HEK293 (cell line): ENCODE measurements at regions of chr21 and their contacts with region 1.

Region 1: DNA sequence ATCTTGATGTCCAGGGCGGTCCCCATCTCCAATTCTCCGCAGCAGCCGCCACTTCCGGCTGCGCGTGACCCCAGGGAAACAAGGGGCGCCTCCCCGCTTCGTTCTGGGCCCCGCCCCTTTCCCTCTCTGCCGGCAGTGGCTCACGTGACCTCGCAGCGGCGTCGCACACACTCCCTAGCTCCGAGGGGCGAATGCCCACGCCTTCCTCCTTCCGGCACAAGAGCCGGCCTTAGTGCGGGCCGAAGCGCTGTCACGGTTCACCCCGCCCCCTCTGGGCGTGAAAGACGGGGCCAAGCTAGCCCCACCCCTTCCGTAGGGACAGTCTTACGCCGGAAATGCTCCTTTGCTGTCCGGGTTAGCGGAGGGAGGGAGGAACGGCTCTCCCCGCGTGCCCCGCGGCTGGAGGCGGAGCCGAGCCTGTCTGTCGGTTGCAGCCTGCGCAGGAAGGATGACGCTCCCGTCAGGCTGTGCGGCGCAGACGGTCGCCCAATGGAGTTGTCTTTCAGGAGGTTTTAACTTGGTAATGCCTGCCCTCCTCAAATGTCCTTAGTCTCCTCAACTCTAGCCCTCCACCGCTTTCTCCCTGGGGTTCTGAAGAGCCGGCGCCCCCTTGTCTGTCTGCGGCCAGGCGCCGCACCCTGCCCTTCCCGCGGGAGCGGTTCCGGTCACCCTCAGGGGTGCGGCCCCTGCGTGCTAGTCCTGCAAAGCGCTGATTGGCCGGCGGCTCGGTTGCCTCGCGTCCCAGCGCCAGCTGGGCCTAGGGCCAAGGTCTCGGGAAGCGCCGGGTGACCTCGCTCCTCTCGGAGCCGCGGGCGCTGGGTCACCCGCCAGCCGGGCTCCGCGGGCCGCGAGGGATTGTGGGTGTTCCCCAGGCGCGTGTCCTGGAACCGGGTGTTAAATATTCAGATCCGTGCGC is at the start of gene VPS26C:
- H3K4me3 ChIP-seq: peak within 1 kb of the TSS; percentile 85
- H3K27ac ChIP-seq: peak within 1 kb of the TSS; percentile 96
- H3K4me1 ChIP-seq: peaks cover 5% of the 10 kb centered on the region; the same call in 1 of the 2 replicates
- CTCF ChIP-seq: no peak

Region 2: DNA sequence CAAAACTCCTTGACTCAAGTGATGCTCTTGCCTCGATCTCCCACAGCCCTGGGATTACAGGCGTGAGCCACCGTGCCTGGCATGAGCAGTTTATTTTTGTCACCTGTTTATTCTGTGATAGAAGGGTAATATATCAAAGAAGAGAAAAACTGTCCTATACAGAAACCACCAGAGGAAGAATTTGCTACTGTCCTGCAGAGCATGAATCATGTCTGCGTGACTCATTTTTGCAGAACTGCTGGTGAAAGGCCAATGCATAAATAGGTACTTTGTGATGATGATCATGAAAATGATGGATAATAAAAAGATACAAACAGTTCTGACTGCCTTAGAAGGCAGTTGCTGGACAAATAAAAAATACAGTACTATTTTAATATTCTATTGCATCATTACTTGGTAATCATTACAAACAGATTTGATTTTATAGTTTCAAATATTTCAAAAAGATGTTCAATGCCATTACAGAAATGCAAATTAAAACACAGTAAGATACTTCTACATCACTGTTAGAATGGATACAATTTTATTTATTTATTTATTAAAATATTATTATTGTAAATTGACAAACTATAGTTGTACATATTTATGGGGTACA is 234.6 kb before region 1 on chr21:
- CTCF ChIA-PET with region 1: no interaction called
- POLR2A ChIA-PET with region 1: no interaction called
- H3K4me3 ChIP-seq: no peak overlapping the region
- H3K27ac ChIP-seq: no peak overlapping the region
- H3K4me1 ChIP-seq: peaks cover 2% of the 10 kb centered on the region; the same call in 1 of the 2 replicates
- CTCF ChIP-seq: no peak

Region 3: DNA sequence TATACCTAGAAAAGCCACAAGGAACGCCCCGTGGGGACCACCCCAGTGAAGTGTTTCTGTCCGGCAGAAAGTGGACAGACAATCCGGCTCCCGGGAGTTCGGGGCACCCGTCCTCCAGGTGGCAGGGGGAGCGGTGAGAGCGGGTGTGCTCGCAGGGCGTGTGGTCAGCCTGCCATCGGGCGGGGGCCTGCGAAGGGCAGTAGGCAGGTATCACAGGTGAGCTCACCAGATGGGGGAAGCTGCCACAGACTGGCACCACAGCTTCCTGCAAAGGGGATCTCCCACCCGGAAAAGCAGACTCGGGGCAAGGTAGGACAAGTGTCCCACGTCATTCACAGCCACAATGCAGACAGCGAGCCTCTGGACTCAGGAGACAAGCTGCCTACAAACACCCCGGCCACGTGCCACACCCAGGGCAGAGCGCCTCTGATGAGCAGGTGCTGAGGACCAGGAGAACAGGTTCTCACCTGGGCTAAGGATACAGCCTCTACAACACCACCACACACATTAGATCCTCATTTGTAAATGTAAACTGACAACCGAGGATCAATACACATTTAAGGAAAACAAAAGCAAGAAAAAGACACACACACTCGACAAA is 36.8 kb before region 1 on chr21:
- CTCF ChIA-PET with region 1: no interaction called
- POLR2A ChIA-PET with region 1: interaction called, 10 read pairs
- H3K4me3 ChIP-seq: no peak overlapping the region
- H3K27ac ChIP-seq: no peak overlapping the region
- H3K4me1 ChIP-seq: no peaks in the 10 kb centered on the region
- CTCF ChIP-seq: no peak

Region 4: GRCh38 chr21:37366482-37367316 is 99.2 kb after region 1 on chr21 and contains the start of gene DYRK1A:
- CTCF ChIA-PET with region 1: no interaction called
- POLR2A ChIA-PET with region 1: interaction called, 40 read pairs
- H3K4me3 ChIP-seq: peak within 1 kb of the TSS; percentile 100
- H3K27ac ChIP-seq: peak within 1 kb of the TSS; percentile 100
- H3K4me1 ChIP-seq: peaks cover 17% of the 10 kb centered on the region
- CTCF ChIP-seq: peak; percentile 83